CD4-positive, alpha-beta memory T cell (primary cell): ENCODE measurements at regions of chr19 and their contacts with region 1.

Region 1: DNA sequence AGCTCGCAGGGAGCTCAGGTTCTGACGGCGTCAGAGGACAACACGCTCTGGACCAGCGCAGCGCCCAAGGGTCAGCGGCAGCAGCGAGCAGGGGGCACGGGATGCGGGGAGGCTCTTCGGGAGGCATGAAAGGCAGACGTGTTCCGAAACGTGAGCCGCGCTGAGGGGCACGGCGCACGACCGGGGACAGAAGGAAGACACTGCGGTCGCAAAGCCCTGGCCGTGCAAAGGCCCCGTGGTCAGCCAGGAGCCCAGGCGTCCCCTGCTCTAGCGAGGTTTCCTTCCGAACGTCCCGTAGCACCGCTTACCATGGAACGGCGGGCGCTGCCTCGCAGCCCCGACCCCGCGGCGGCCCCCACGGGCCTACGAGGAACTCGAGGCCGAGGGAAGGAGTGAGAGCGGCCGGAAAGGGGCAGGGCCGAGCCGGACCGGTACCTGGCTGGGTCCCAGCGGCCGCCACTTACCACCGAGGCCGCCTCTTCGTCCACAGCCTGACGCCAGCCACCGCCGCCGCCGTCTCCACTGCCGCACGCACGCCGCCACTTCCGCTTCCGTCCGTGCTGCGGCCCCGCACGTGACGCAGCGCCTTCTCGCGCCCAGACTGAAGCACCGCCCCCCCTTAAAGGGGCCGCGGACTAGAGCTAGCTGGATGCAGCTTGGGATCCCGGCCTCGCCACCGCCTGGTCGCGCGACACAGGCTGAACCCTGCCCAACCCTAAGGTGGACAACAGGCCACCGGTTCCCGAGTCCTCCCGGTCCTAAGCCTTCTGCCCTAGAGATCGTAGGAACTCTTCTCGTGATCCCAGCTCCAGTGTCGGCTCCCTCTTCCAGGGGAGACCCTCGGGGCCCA is 9.4 kb downstream of the ABHD17A start:
- DNase-seq: peak; percentile 80 to 87 (median 85)
- H3K4me3 ChIP-seq: peak overlapping the region; percentile 94 to 97
- H3K4me3 Mint-ChIP-seq: peak overlapping the region; percentile 93 to 99 (median 98)
- H3K27ac ChIP-seq: peak overlapping the region; percentile 92
- H3K27ac Mint-ChIP-seq: peak overlapping the region; percentile 89 to 99 (median 98)
- H3K4me1 ChIP-seq: peaks cover 46% of the 10 kb centered on the region
- H3K4me1 Mint-ChIP-seq: peaks cover 12 to 43% (median 20%) of the 10 kb centered on the region in 4 donors
- H3K27me3 ChIP-seq: no peaks in the 10 kb centered on the region
- H3K27me3 Mint-ChIP-seq: no peaks in the 10 kb centered on the region

Region 2: GRCh38 chr19:1855040-1855827 is 20.6 kb before region 1 on chr19:
- CTCF ChIA-PET with region 1: interaction called, 4 read pairs
- POLR2A ChIA-PET with region 1: interaction called, 18 read pairs
- intact Hi-C with region 1: no loop called
- DNase-seq: peak; percentile 81 to 85 (median 84)
- H3K4me3 ChIP-seq: peak overlapping the region; percentile 67 to 77
- H3K4me3 Mint-ChIP-seq: peak overlapping the region; percentile 82 to 89 (median 86)
- H3K27ac ChIP-seq: peak overlapping the region; percentile 73
- H3K27ac Mint-ChIP-seq: peak overlapping the region; percentile 89 to 94 (median 93)
- H3K4me1 ChIP-seq: peaks cover 86% of the 10 kb centered on the region
- H3K4me1 Mint-ChIP-seq: peaks cover 25 to 72% (median 45%) of the 10 kb centered on the region in 4 donors
- H3K27me3 ChIP-seq: no peaks in the 10 kb centered on the region
- H3K27me3 Mint-ChIP-seq: no peaks in the 10 kb centered on the region

Region 3: DNA sequence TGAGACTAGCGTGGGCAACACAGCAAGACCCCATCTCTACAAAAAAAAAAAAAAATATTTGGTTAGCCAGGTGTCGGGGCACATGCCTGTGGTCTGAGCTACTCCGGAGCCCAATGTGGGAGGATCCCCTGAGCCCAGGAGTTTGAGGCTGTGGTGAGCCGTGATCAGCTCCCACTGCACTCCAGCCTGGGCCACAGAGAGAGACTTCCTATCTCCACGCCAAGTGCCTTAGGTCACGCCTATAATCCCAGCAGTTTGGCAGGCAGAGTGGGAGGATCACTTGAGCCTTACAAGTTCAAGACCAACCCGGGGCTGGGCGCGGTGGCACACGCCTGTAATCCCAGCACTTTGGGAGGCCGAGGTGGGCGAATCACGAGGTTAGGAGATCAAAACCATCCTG is 20.6 kb after region 1 on chr19:
- CTCF ChIA-PET with region 1: interaction called, 3 read pairs
- POLR2A ChIA-PET with region 1: interaction called, 81 read pairs
- intact Hi-C with region 1: no loop called
- DNase-seq: peak in 1 of 5 donors; percentile 36
- H3K4me3 ChIP-seq: no peak overlapping the region
- H3K4me3 Mint-ChIP-seq: peak overlapping the region; percentile 88 to 93 (median 90)
- H3K27ac ChIP-seq: peak overlapping the region; percentile 9
- H3K27ac Mint-ChIP-seq: peak overlapping the region in 4 of 7 donors; percentile 42 to 97 (median 75)
- H3K4me1 ChIP-seq: peaks cover 40% of the 10 kb centered on the region
- H3K4me1 Mint-ChIP-seq: peaks cover 10 to 45% (median 22%) of the 10 kb centered on the region in 4 donors
- H3K27me3 ChIP-seq: no peaks in the 10 kb centered on the region
- H3K27me3 Mint-ChIP-seq: no peaks in the 10 kb centered on the region

Region 4: GRCh38 chr19:1942078-1942933 is 66.4 kb after region 1 on chr19:
- CTCF ChIA-PET with region 1: no interaction called
- POLR2A ChIA-PET with region 1: interaction called, 12 read pairs
- intact Hi-C with region 1: no loop called
- DNase-seq: peak; percentile 78 to 89 (median 84)
- H3K4me3 ChIP-seq: peak overlapping the region; percentile 81 to 99
- H3K4me3 Mint-ChIP-seq: peak overlapping the region; percentile 90 to 99 (median 97)
- H3K27ac ChIP-seq: peak overlapping the region; percentile 91
- H3K27ac Mint-ChIP-seq: peak overlapping the region; percentile 97 to 100 (median 99)
- H3K4me1 ChIP-seq: peaks cover 45% of the 10 kb centered on the region
- H3K4me1 Mint-ChIP-seq: peaks cover 15 to 49% (median 33%) of the 10 kb centered on the region in 4 donors
- H3K27me3 ChIP-seq: no peaks in the 10 kb centered on the region
- H3K27me3 Mint-ChIP-seq: peaks cover 0 to 2% of the 10 kb centered on the region in 2 donors